SK-N-SH (cell line): ENCODE measurements at regions of chr12 and their contacts with region 1.

Region 1: DNA sequence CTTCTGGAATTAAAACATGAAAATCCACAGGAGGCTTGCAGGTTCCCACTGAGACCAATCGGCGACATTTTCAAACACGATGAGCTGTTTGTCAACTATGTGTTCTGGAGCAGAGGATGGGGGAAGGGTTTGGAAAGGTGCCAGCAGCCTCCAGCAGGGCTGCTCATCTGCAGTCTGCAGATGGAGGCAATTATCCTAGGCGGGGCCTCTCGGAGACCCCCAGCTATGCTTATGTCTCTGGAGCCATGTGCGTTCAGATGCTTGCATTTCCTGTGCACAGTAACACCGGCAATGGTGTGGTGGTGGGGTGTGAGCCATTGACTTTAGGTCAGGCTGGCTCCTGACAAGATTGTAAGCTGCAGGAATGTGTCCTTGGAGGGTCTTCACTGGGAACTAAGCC is 51.7 kb downstream of the RPH3A start:
- DNase-seq: peak; percentile 67
- H3K4me3 ChIP-seq: no peak overlapping the region
- H3K27ac ChIP-seq: peak overlapping the region; percentile 94 to 96; a peak in 3 of 4 replicates
- H3K4me1 ChIP-seq: peaks cover 30 to 53% of the 10 kb centered on the region in 2 experiments; a peak in 3 of 4 replicates
- H3K27me3 ChIP-seq: peaks cover 5% of the 10 kb centered on the region; the same call in 1 of the 2 replicates
- CTCF ChIP-seq: no peak
- EP300 ChIP-seq: peak in 1 of 2 experiments; percentile 88; a peak in 2 of 4 replicates
- RAD21 ChIP-seq: peak; percentile 9

Region 2: GRCh38 chr12:112792301-112792700 is 51.0 kb before region 1 on chr12:
- CTCF ChIA-PET with region 1: interaction called, 10 read pairs
- POLR2A ChIA-PET with region 1: interaction called, 4 read pairs
- DNase-seq: peak; percentile 61
- H3K4me3 ChIP-seq: peak overlapping the region in 1 of 2 experiments; percentile 48; a peak in 2 of 4 replicates
- H3K27ac ChIP-seq: peak overlapping the region in 1 of 2 experiments; percentile 98; a peak in 2 of 4 replicates
- H3K4me1 ChIP-seq: peaks cover 5 to 39% of the 10 kb centered on the region in 2 experiments; a peak in 3 of 4 replicates
- H3K27me3 ChIP-seq: no peaks in the 10 kb centered on the region
- CTCF ChIP-seq: no peak
- EP300 ChIP-seq: peak in 1 of 2 experiments; percentile 56; a peak in 2 of 4 replicates
- RAD21 ChIP-seq: peak; percentile 16; the same call in 1 of the 2 replicates

Region 3: GRCh38 chr12:112808156-112808555 is 35.1 kb before region 1 on chr12:
- CTCF ChIA-PET with region 1: no interaction called
- POLR2A ChIA-PET with region 1: no interaction called
- DNase-seq: no peak
- H3K4me3 ChIP-seq: no peak overlapping the region
- H3K27ac ChIP-seq: peak overlapping the region in 1 of 2 experiments; percentile 100; a peak in 2 of 4 replicates
- H3K4me1 ChIP-seq: peaks cover 0 to 47% of the 10 kb centered on the region in 2 experiments; a peak in 2 of 4 replicates
- H3K27me3 ChIP-seq: no peaks in the 10 kb centered on the region
- CTCF ChIP-seq: no peak
- EP300 ChIP-seq: no peak
- RAD21 ChIP-seq: no peak